ENCODE measurements at regions of chr16 and their contacts with region 1.

Region 1: GRCh38 chr16:86563489-86564345 is 2.9 kb upstream of the FOXC2 start:
- DNase-seq: peak; percentile 17
- ATAC-seq: peak; percentile 96
- H3K4me3 ChIP-seq: no peak overlapping the region
- H3K27ac ChIP-seq: no peak overlapping the region
- H3K4me1 ChIP-seq: no peaks in the 10 kb centered on the region
- H3K27me3 ChIP-seq: peaks cover 5 to 9% of the 10 kb centered on the region in 2 experiments
- CTCF ChIP-seq: peak; percentile 98 to 100 (median 100); a peak in 5 of 6 replicates
- EP300 ChIP-seq: no peak
- POLR2A ChIP-seq: no peak
- RAD21 ChIP-seq: peak; percentile 98

Region 2: GRCh38 chr16:86874141-86874540 is 310.4 kb after region 1 on chr16:
- CTCF ChIA-PET with region 1: interaction called, 33 read pairs
- POLR2A ChIA-PET with region 1: no interaction called
- RAD21 ChIA-PET with region 1: interaction called, 16 read pairs
- SMC1A ChIA-PET with region 1: interaction called, 20 read pairs
- in situ Hi-C with region 1: loop called (anchors 10 kb)
- intact Hi-C with region 1: loop called (anchors 1 kb)
- DNase-seq: no peak
- ATAC-seq: peak; percentile 73
- H3K4me3 ChIP-seq: no peak overlapping the region
- H3K27ac ChIP-seq: no peak overlapping the region
- H3K4me1 ChIP-seq: no peaks in the 10 kb centered on the region
- H3K27me3 ChIP-seq: peaks cover 0 to 3% of the 10 kb centered on the region in 2 experiments; a peak in 3 of 4 replicates
- CTCF ChIP-seq: peak; percentile 53 to 74 (median 57); a peak in 5 of 6 replicates
- EP300 ChIP-seq: no peak
- POLR2A ChIP-seq: no peak
- RAD21 ChIP-seq: peak; percentile 47; the same call in 1 of the 2 replicates

Region 3: DNA sequence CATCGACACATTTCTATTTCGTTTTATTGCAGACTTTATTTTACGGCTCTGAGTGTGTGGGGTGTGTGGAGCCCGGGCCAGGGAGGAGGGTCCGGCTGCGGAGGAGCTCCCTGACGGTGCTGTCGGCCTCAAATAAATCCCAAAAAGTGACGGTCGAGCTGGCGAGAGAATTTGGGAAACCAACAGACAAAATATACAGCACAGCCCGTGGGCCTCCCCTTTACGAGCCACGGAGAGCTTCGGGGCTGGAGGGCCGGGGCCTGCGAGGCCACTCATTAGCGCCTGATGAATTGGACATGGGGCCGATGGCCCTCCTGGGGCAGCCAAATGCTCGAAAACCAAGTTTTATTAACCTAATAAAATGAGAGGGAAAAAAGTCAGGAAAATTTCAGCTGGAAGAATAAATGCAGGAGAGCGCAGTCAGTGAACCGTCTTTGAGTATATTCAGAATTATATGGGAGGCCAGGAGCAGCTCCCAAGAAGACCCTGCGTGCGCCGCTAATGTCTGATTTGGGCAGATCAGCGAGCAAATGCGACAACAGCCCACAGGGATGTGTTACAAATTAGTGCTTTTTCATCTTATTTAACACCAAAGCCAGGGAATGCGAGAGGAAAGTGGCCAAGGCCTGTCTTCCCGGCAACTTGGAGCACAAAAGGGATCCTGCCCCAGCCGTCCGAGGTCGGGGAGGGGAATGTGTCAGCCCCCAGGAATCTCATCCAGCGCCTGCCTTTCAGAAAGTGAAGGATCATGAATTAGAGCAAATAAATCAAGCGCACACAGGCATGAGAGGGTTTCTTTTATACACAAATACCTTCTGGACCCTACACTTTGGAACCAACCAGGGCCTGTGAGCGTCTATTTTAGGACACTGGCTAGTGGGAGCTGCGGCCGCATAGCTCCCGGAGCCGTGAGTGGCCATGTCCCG is 504.4 kb after region 1 on chr16:
- CTCF ChIA-PET with region 1: interaction called, 89 read pairs
- POLR2A ChIA-PET with region 1: no interaction called
- RAD21 ChIA-PET with region 1: interaction called, 25 read pairs
- SMC1A ChIA-PET with region 1: interaction called, 50 read pairs
- in situ Hi-C with region 1: loop called (anchors 5 kb)
- intact Hi-C with region 1: no loop called
- DNase-seq: no peak
- ATAC-seq: no peak
- H3K4me3 ChIP-seq: no peak overlapping the region
- H3K27ac ChIP-seq: no peak overlapping the region
- H3K4me1 ChIP-seq: no peaks in the 10 kb centered on the region
- H3K27me3 ChIP-seq: peaks cover 0 to 6% of the 10 kb centered on the region in 2 experiments; a peak in 3 of 4 replicates
- CTCF ChIP-seq: no peak
- EP300 ChIP-seq: no peak
- POLR2A ChIP-seq: no peak
- RAD21 ChIP-seq: no peak

Region 4: DNA sequence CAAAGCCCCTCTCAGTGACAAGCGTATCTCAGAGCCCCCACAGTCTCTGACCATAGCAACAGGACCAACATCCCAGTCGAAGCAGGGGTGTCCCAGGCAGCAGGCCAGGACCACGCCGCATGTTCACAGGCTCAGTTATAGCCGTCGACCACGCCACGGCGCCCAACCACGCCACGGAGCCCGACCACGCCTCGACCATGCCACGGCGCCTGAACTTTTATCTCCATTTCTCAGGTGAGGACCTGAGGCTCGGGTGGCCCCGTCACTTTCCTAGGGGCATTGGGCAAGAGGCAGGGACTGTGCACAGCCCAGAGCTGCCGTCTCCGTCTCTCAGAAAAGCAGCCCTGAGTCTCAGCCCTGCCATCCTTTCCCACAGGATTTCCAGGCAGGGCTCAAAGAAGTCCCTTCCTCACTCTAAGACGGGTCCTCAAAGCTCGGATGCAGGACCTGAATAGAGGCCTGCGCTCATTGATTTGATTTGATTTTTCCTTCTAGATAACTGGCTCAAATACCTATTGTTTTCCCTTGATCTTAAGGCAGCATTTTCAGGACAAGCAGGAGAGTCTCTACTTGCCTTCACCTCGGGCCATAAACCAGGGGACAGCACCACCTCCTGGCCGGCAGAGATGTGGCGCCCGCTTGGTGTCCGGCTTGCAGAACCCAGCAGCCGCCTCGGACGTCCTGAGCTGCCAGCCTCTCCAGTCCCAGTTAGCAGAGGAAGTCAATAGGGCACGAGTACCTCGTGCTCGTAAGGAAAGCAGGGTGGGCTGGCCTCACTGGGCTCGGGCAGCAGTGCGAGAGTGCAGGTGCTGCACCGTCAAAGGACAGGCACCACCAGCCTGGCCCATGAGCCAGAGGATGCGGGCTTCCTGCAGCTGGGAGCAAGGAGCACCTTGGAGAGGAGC is 714.7 kb after region 1 on chr16:
- CTCF ChIA-PET with region 1: interaction called, 29 read pairs
- POLR2A ChIA-PET with region 1: no interaction called
- RAD21 ChIA-PET with region 1: no interaction called
- SMC1A ChIA-PET with region 1: interaction called, 5 read pairs
- in situ Hi-C with region 1: loop called (anchors 5 kb)
- intact Hi-C with region 1: loop called (anchors 1 kb)
- DNase-seq: no peak
- ATAC-seq: peak; percentile 97
- H3K4me3 ChIP-seq: no peak overlapping the region
- H3K27ac ChIP-seq: no peak overlapping the region
- H3K4me1 ChIP-seq: no peaks in the 10 kb centered on the region
- H3K27me3 ChIP-seq: no peaks in the 10 kb centered on the region
- CTCF ChIP-seq: peak; percentile 77 to 84 (median 82)
- EP300 ChIP-seq: no peak
- POLR2A ChIP-seq: no peak
- RAD21 ChIP-seq: peak; percentile 69

Measured in GM12878 (cell line).